ENCODE measurements at regions of chr19 and their contacts with region 1.

Region 1: DNA sequence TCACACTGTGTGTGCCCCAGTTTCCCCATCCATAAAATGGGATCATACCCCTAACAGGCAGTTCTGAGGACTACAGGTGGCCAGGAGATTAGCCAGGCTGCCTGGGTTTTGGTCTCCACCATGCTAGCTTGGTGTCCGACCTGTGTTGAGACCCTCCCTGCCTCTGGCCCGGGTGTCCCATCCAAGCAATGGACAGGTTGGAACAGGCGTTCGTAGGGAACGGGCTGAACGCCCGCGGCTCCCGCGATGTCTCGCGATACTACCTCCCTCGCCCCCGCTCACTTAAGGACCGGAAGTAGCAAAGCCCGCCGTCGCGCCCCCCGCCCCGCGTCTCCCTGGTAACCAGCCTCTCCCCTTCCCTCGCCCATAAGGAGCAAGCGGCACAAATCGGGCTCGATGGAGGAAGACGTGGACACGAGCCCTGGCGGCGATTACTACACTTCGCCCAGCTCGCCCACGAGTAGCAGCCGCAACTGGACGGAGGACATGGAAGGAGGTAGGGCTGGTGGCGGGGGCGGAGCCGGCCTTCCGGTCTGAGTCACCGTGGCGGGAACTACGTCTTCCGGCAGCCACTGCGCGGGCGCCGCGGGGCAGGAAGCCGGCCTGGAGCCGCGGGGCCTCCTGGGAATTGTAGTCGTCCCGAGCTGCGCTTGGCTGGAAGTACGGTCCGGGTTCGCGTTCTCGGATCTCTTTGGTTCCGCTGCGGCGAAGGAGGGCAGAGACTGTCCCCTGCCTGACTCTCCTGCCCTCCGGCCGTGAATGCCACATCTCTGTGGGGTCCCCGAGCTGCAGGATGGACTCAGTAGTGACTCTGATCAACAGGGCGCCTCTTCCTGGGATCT is 45.4 kb downstream of the SMIM24 start:
- DNase-seq: peak; percentile 72
- ATAC-seq: peak; percentile 89
- H3K4me3 ChIP-seq: peak overlapping the region; percentile 57 to 71 (median 66)
- H3K27ac ChIP-seq: peak overlapping the region; percentile 77
- H3K4me1 ChIP-seq: peaks cover 19% of the 10 kb centered on the region
- H3K27me3 ChIP-seq: no peaks in the 10 kb centered on the region
- CTCF ChIP-seq: no peak
- EP300 ChIP-seq: no peak
- POLR2A ChIP-seq: peak; percentile 52 to 58; a peak in 3 of 4 replicates
- RAD21 ChIP-seq: no peak; the same call in 1 of the 2 replicates

Region 2: GRCh38 chr19:3336680-3337523 is 98.0 kb before region 1 on chr19:
- CTCF ChIA-PET with region 1: interaction called, 4 read pairs
- POLR2A ChIA-PET with region 1: no interaction called
- in situ Hi-C with region 1: loop called (anchors 5 kb)
- intact Hi-C with region 1: no loop called
- DNase-seq: peak; percentile 24
- ATAC-seq: peak; percentile 66
- H3K4me3 ChIP-seq: peak overlapping the region; percentile 19 to 51 (median 20); a peak in 3 of 6 replicates
- H3K27ac ChIP-seq: no peak overlapping the region
- H3K4me1 ChIP-seq: peaks cover 38% of the 10 kb centered on the region
- H3K27me3 ChIP-seq: no peaks in the 10 kb centered on the region; a peak in 1 of 5 replicates
- CTCF ChIP-seq: no peak
- EP300 ChIP-seq: no peak
- POLR2A ChIP-seq: no peak
- RAD21 ChIP-seq: no peak

Region 3: DNA sequence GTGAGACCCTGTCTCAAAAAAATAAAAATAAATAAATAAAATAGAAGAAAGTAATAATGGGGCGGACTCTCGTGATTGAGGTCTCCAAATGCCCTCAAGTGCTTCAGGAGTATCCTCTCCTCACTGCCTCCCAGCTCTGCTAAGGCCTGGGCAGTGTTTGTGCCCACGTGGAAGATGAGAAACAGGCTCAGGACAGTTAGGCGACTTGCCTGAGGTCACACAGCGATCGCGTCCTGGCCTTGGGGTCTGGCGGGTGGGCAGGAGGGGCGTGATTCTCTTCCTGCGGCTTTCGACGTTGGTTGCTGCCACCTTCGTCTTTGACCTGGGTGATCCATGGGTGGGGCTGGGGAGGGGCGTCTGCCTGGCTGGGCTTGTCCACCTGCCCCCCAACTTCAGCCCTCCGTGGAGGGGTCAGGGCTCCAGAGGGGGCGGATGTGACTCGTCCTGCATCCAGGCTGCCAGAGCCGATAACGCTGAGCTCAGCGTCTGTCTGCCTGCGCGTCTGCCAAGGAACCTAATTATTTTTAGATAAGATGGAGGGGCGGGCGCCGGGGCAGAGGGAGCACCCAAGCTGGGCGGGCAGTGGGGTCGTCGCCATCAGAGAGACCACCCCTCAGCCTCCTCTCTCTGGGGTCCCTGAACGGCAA is 11.6 kb before region 1 on chr19:
- CTCF ChIA-PET with region 1: no interaction called
- POLR2A ChIA-PET with region 1: no interaction called
- in situ Hi-C with region 1: no loop called
- intact Hi-C with region 1: no loop called
- DNase-seq: no peak
- ATAC-seq: no peak
- H3K4me3 ChIP-seq: no peak overlapping the region
- H3K27ac ChIP-seq: no peak overlapping the region
- H3K4me1 ChIP-seq: no peaks in the 10 kb centered on the region
- H3K27me3 ChIP-seq: no peaks in the 10 kb centered on the region
- CTCF ChIP-seq: no peak
- EP300 ChIP-seq: no peak
- POLR2A ChIP-seq: no peak
- RAD21 ChIP-seq: no peak

Region 4: GRCh38 chr19:3516675-3517207 is 81.8 kb after region 1 on chr19:
- CTCF ChIA-PET with region 1: no interaction called
- POLR2A ChIA-PET with region 1: no interaction called
- in situ Hi-C with region 1: no loop called
- intact Hi-C with region 1: no loop called
- DNase-seq: no peak
- ATAC-seq: no peak
- H3K4me3 ChIP-seq: no peak overlapping the region
- H3K27ac ChIP-seq: no peak overlapping the region
- H3K4me1 ChIP-seq: peaks cover 15% of the 10 kb centered on the region
- H3K27me3 ChIP-seq: no peaks in the 10 kb centered on the region
- CTCF ChIP-seq: no peak
- EP300 ChIP-seq: no peak
- POLR2A ChIP-seq: no peak
- RAD21 ChIP-seq: no peak